Activated T-helper 2 cell treated with anti-CD3 and anti-CD28 coated beads, Interferon-gamma antibody, Interleukin-2, Interleukin-4, amounts not matched to agents 10 μg/mL and 5 μg/mL and 100 μg/mL, durations not matched to agents 14 hours and 24 hours and 36 hours (primary cell): ENCODE measurements at regions of chr9 and their contacts with region 1.

Region 1: DNA sequence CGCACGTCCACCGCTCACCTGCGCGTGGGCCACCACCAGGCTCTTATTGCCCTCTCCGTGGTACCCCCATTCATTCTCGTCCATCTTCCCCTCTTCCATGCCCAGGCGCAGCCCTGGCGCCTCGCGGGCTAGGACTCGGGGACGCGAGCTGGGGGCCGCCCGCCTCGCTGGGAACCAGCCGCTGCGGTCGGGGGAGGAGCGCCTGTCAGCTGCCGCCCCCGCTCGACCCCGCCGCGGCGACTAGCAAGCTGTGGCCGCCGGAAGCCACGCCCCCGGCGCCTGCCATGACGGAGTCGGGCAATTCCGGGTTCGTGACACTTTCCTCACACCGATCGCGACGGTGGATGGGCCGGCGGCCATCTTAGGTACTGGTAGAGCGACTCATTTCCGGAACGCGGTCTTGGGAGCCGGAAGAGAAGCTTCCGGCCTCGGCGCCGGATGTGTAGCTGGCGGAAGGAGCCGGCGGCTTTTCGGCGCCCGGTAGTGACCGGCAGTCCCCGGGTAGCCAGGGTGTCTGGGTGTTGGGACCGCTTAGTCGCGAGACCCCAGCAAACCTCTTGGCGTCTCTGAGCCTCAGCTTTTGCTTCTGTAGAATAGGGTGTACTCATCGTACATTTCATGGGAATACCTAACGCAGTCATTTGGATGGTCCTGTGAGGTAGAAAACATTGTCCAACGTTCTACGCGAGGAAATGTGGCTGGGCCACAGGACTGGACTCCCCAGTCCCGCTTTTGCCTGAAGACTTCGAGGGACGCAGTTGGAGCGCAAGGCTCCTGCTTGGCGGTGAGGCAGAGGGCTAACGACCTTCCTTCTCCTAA is at the start of gene IPPK:
- DNase-seq: peak; percentile 98
- H3K4me3 Mint-ChIP-seq: peak within 1 kb of the TSS; percentile 93
- H3K27ac Mint-ChIP-seq: peak within 1 kb of the TSS; percentile 81
- H3K4me1 Mint-ChIP-seq: peaks cover 21% of the 10 kb centered on the region
- H3K27me3 Mint-ChIP-seq: no peaks in the 10 kb centered on the region
- total RNA-seq, gene IPPK: 11.5 and 14.8 TPM in 2 replicates

Region 2: DNA sequence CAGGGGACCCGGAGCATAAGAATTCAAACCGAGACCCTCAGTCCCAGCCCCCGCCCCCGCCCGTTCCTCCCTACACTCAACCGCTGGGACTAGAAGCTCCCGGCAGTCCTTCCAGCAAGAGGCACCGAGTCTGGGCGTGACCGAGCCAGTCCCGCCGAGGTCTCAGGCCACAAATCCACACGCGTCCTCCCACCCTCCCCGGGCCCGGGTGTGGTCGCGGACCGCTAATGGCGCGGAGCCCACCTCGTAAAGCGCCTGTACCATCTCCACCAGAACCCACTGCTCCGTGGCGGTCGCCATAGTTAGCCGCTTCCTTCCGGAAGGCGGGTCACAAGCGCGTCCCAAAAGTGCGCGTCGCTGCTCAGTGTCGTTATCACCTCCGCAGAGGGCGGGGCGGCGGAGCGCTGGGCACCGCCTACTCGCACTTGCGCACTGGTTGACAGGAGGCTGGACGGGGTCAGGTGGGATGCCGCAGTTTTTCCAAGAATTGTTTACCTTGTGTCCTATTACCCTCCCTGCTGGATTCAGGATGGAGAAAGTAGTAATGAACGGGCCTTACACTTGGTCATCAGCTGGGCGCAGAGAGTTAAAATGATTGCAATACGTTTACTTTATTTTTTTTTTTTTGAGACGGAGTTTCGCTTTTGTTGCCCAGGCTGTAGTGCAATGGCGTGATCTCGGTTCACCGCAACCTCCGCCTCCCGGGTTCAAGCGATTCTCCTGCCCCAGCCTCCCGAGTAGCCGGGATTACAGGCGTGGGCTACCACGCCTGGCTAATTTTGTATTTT is 554.8 kb before region 1 on chr9 and contains the start of gene SPTLC1:
- intact Hi-C with region 1: loop called (anchors 1 kb)
- DNase-seq: peak; percentile 93
- H3K4me3 Mint-ChIP-seq: peak within 1 kb of the TSS; percentile 96
- H3K27ac Mint-ChIP-seq: peak within 1 kb of the TSS; percentile 96
- H3K4me1 Mint-ChIP-seq: peaks cover 26% of the 10 kb centered on the region
- H3K27me3 Mint-ChIP-seq: no peaks in the 10 kb centered on the region
- total RNA-seq, gene SPTLC1: 63.2 and 64.0 TPM in 2 replicates

Region 3: GRCh38 chr9:92325269-92325990 is 344.7 kb before region 1 on chr9 and contains the starts of genes CENPP and NOL8:
- intact Hi-C with region 1: loop called (anchors 1 kb)
- DNase-seq: peak; percentile 82
- H3K4me3 Mint-ChIP-seq: peak within 1 kb of the TSS; percentile 92
- H3K27ac Mint-ChIP-seq: peak within 1 kb of the TSS; percentile 95
- H3K4me1 Mint-ChIP-seq: peaks cover 31% of the 10 kb centered on the region
- H3K27me3 Mint-ChIP-seq: no peaks in the 10 kb centered on the region
- total RNA-seq, gene CENPP: 19.2 and 21.0 TPM in 2 replicates
- total RNA-seq, gene NOL8: 73.2 and 75.5 TPM in 2 replicates

Region 4: DNA sequence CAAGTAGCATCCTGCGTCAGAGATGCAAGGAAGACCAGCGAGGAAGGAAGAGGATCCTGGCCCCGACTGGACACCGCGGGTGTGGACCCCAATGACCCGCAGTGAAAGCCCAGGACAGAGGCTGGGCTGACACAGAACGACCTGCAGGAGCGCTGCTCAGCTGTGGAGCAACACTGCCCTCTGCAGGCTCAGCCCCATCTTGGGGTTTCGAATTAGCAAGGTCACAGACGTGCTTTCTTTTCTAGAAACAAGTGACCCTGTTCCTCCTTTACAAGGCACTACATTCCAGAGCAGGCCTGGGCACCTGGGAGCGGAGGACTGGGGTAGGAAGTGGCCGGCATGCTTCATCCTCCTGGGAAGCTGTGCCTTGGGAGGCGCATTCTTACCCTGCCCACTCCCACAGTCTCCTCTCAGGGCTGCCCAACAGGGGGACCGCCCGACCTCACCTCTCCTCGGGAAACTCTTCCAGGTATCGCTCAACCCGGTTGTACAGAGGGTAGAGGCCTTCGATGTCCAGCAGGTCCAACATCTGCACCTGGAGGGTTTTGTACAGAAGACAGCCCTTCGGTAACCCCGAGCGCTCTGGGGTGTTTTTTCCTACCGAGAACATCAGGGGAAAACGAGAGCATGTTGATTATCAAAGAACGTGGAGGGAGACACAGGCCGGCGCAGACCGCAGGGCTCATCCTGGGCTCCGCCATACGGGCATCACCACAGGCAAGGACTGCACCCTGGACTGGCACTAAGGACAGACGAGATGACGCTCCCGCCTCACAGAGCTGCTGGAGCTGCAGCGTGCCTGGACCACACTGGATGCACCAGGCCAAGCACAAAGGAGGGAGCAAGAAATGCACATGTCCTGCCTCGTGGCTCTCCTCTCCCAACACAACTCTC is 35.1 kb before region 1 on chr9:
- intact Hi-C with region 1: loop called (anchors 5 kb)
- DNase-seq: peak; percentile 55
- H3K4me3 Mint-ChIP-seq: no peak overlapping the region
- H3K27ac Mint-ChIP-seq: no peak overlapping the region
- H3K4me1 Mint-ChIP-seq: peaks cover 15% of the 10 kb centered on the region
- H3K27me3 Mint-ChIP-seq: no peaks in the 10 kb centered on the region

Region 5: DNA sequence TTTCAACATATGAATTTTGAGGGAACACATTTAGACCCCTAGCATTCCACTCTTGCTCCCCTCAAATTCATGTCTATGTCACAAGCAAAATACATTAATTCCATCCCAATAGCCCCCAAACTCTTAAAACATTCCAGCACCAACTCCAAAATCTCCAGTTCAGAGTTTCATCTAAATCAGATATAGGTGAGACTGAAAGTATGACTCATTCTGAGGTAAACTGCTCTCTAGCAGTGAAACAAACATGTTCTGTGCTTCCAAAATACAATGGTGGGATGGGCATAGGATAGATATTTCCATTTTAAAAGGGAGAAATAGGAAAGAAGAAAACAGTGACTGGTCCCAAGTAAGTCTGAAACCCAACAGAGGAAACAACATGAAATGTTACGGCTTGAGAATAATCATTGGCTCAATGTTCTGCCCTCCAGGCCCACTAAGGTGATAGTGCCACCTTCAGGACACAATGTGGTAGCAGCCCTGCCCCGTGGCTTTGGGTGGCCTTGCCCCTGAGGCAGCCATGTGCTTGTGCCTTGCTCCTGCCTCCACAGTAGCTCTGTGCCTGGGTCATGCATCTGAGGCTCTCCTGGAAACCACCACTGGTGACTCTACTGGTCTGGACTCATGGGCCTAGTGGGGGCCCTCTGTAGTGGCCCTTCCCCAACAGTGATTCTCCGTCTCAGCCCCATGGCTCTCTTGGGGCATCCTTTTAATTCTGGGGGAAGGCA is 36.3 kb after region 1 on chr9:
- intact Hi-C with region 1: loop called (anchors 2 kb)
- DNase-seq: peak; percentile 45
- H3K4me3 Mint-ChIP-seq: no peak overlapping the region
- H3K27ac Mint-ChIP-seq: peak overlapping the region; percentile 26
- H3K4me1 Mint-ChIP-seq: peaks cover 24% of the 10 kb centered on the region
- H3K27me3 Mint-ChIP-seq: no peaks in the 10 kb centered on the region

Region 6: DNA sequence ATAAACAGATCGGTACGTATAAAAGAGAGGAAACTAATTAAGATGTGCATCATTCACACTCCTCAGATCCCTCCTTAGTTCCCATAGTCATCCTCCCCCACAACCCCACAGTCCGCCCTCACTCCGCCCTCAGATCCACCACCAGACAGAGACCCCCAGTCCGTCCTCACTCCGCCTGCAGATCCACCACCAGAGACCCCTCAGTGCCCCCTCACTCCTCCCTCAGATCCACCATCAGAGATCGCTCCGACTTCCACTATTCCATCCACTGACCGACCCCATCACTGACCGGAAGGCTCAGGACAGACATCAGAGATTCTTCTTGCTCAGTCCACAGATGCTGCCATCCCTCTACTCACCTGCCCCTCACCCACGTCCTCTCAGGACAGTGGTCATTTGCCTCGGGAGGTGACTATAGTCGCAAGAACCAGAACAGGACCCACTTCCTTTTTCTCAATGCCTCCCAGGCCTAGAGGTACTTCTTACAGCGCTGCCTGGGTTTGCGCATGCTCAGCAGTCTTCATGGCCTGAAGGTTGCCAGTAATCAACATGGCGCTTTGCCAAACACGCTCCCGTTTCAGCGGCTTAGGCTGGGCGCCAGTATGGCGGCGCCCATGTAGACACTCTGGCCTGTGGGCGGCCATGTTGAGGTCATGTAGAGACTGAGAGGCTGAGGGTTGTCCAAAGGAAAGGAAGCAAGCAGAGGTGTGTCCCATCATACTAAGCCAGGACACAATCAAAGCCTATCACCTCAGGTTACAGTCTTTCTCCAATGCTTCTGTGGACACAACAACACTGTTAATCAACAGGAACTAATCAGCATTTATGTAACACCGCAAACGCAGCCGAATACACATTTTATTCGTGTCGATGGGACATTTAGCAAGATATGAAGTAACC is 207.7 kb after region 1 on chr9 and contains the start of gene ZNF484:
- intact Hi-C with region 1: loop called (anchors 1 kb)
- DNase-seq: peak; percentile 93
- H3K4me3 Mint-ChIP-seq: peak within 1 kb of the TSS; percentile 95
- H3K27ac Mint-ChIP-seq: peak within 1 kb of the TSS; percentile 95
- H3K4me1 Mint-ChIP-seq: peaks cover 33% of the 10 kb centered on the region
- H3K27me3 Mint-ChIP-seq: no peaks in the 10 kb centered on the region
- total RNA-seq, gene ZNF484: 7.5 and 8.0 TPM in 2 replicates